RWPE1 (cell line): ENCODE measurements at regions of chr6 and their contacts with region 1.

Region 1: DNA sequence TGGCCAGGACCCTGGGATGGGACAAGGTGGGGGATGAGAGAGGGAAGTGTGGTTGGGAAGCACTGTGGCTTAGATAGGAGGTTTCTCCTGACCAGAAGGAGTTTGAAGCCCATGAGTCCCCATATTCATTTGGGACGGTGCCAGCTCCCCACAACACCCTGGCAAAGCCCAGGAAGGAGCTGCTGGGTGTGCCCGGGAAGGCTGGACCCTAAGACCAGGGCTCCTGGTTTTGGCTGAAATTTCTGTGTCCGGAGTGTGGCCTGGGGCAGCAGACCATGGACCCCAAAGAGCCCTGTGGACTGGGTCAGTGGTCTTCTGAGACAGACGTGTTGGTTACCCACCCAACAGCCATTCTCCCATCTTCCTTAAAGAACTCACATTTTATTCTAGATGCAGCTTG is 15.2 kb downstream of the MAPK13 start:
- DNase-seq: no peak
- H3K27ac ChIP-seq: no peak overlapping the region
- CTCF ChIP-seq: no peak

Region 2: DNA sequence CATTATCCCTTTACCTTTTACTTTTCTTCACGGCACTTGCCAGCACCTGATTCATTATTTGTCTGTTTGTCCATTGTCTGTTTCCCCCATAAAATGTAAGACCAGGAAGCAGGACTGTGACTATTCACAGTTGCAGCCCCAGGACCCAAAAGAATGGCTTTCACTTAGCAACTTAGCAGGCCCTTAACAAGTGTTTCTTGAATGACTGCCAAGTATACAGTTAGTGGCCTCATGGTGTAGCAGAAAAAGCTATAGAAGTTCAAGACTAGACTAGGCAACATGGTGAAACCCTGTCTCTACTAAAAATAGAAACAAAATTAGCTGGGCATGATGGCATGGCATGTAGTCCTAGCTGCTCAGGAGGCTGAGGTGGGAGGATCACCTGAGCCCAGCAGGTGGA is 125.3 kb before region 1 on chr6:
- CTCF ChIA-PET with region 1: no interaction called
- POLR2A ChIA-PET with region 1: no interaction called
- DNase-seq: no peak
- H3K27ac ChIP-seq: no peak overlapping the region
- CTCF ChIP-seq: no peak

Region 3: DNA sequence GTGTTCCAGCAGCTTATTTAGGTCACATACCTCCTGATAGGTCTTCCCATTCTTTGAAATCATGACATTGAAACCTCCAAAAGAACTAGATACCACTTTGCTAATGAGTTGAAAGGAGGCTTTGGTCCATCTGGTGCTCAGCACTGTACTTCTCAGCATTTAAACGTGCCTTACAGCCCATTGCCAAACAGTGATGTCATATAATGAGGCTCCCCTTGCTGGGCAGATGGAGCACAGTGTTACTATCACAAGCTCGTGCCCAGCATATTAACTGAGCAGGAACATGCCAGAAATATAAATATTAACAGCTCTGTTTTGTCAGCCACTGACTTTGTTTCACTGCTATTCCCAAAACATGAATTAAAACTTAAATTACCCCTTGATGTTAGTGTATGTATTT is 40.7 kb before region 1 on chr6:
- CTCF ChIA-PET with region 1: no interaction called
- POLR2A ChIA-PET with region 1: no interaction called
- DNase-seq: no peak
- H3K27ac ChIP-seq: no peak overlapping the region
- CTCF ChIP-seq: no peak

Region 4: GRCh38 chr6:36187446-36187845 is 42.0 kb after region 1 on chr6:
- CTCF ChIA-PET with region 1: interaction called, 12 read pairs
- POLR2A ChIA-PET with region 1: no interaction called
- DNase-seq: no peak
- H3K27ac ChIP-seq: no peak overlapping the region
- CTCF ChIP-seq: no peak